CD8-positive, alpha-beta memory T cell (primary cell): ENCODE measurements at regions of chr20 and their contacts with region 1.

Region 1: GRCh38 chr20:38805502-38805957 is at the start of gene PPP1R16B:
- DNase-seq: peak; percentile 76 to 88 (median 83)
- H3K4me3 ChIP-seq: peak within 1 kb of the TSS; percentile 82
- H3K4me3 Mint-ChIP-seq: peak within 1 kb of the TSS; percentile 89 to 96 (median 91)
- H3K27ac ChIP-seq: peak within 1 kb of the TSS; percentile 98
- H3K27ac Mint-ChIP-seq: peak within 1 kb of the TSS; percentile 93 to 100 (median 98)
- H3K4me1 ChIP-seq: peaks cover 51% of the 10 kb centered on the region
- H3K4me1 Mint-ChIP-seq: peaks cover 51 to 56% (median 54%) of the 10 kb centered on the region in 3 donors
- H3K27me3 ChIP-seq: no peaks in the 10 kb centered on the region
- H3K27me3 Mint-ChIP-seq: peaks cover 0 to 7% of the 10 kb centered on the region in 2 donors
- total RNA-seq, gene PPP1R16B: 167 to 171 TPM

Region 2: DNA sequence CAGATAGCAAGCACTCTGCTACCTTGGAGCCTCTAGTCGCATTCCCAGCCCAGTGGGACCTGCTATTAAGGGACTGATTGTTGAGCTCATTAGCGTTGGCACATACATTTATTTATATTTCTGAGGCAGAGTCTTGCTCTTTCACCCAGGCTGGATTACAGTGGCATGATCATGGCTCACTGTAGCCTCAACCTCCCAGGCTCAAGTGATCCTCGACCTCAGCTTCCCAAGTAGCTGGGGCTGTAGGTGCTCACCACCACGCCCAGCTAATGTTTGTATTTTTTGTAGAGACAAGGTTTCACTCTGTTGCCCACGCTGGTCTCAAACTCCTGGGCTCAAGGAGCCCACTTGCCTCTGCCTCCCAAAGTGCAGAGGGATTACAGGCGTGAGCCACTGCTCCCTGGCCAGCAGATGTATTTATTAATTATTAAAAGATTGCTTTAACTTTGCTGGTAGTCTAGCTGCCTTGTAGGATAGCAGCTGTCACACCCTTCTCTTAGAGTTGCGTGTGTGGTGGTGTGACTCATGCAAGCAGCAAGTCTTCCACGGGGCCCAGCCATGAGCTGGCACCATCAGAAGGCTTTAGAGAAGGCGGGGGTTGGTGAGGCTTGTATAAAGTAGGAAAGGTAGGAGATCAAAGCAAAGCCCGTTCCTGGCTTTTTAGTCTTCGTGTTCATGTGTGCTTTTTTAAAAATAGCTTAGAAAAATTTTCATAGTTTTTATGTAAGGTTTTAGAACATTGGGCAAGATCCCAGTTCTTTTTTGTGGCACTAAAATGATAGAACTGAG is 40.8 kb before region 1 on chr20:
- CTCF ChIA-PET with region 1: no interaction called
- POLR2A ChIA-PET with region 1: no interaction called
- DNase-seq: no peak
- H3K4me3 ChIP-seq: no peak overlapping the region
- H3K4me3 Mint-ChIP-seq: no peak overlapping the region
- H3K27ac ChIP-seq: no peak overlapping the region
- H3K27ac Mint-ChIP-seq: peak overlapping the region in 4 of 8 donors; percentile 18 to 39 (median 30)
- H3K4me1 ChIP-seq: no peaks in the 10 kb centered on the region
- H3K4me1 Mint-ChIP-seq: peaks cover 0 to 4% (median 0%) of the 10 kb centered on the region in 3 donors
- H3K27me3 ChIP-seq: no peaks in the 10 kb centered on the region
- H3K27me3 Mint-ChIP-seq: no peaks in the 10 kb centered on the region

Region 3: GRCh38 chr20:38790200-38791053 is 15.1 kb before region 1 on chr20:
- CTCF ChIA-PET with region 1: interaction called, 26 read pairs
- POLR2A ChIA-PET with region 1: interaction called, 6 read pairs
- DNase-seq: peak; percentile 24 to 69 (median 37)
- H3K4me3 ChIP-seq: no peak overlapping the region
- H3K4me3 Mint-ChIP-seq: peak overlapping the region in 4 of 7 donors; percentile 44 to 77 (median 62)
- H3K27ac ChIP-seq: no peak overlapping the region
- H3K27ac Mint-ChIP-seq: peak overlapping the region in 4 of 8 donors; percentile 62 to 95 (median 82)
- H3K4me1 ChIP-seq: peaks cover 5% of the 10 kb centered on the region
- H3K4me1 Mint-ChIP-seq: peaks cover 10 to 18% (median 11%) of the 10 kb centered on the region in 3 donors
- H3K27me3 ChIP-seq: no peaks in the 10 kb centered on the region
- H3K27me3 Mint-ChIP-seq: peaks cover 0 to 2% of the 10 kb centered on the region in 2 donors

Region 4: DNA sequence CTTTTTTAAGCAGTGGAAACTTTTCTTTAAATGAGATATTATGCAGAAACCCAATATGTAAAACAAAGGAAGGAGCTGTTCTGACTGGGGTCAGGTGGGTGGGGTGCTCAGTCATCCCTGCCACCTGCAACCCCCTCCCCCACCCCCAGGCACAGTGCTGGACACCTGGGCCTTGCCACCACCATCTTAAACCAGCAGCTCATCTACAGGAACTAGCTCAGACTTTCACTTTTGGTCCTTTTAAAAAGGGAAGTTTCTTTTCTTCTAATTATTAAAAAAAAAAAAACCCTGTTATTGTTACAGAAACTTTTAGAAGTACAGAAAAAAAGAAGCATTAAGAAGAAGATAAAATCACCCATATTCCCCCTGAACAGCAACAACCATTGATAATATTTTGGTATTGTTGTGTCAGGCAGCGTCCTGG is 37.0 kb after region 1 on chr20:
- CTCF ChIA-PET with region 1: interaction called, 11 read pairs
- POLR2A ChIA-PET with region 1: interaction called, 11 read pairs
- DNase-seq: peak in 2 of 5 donors; percentile 45 to 65
- H3K4me3 ChIP-seq: peak overlapping the region; percentile 48
- H3K4me3 Mint-ChIP-seq: peak overlapping the region; percentile 15 to 92 (median 74)
- H3K27ac ChIP-seq: peak overlapping the region; percentile 89
- H3K27ac Mint-ChIP-seq: peak overlapping the region; percentile 93 to 100 (median 98)
- H3K4me1 ChIP-seq: peaks cover 69% of the 10 kb centered on the region
- H3K4me1 Mint-ChIP-seq: peaks cover 77 to 98% (median 86%) of the 10 kb centered on the region in 3 donors
- H3K27me3 ChIP-seq: no peaks in the 10 kb centered on the region
- H3K27me3 Mint-ChIP-seq: peaks cover 0 to 3% of the 10 kb centered on the region in 2 donors

Region 5: GRCh38 chr20:38875175-38875993 is 69.9 kb after region 1 on chr20:
- CTCF ChIA-PET with region 1: interaction called, 66 read pairs
- POLR2A ChIA-PET with region 1: interaction called, 80 read pairs
- DNase-seq: peak; percentile 65 to 90 (median 76)
- H3K4me3 ChIP-seq: peak overlapping the region; percentile 61
- H3K4me3 Mint-ChIP-seq: peak overlapping the region; percentile 78 to 93 (median 88)
- H3K27ac ChIP-seq: peak overlapping the region; percentile 85
- H3K27ac Mint-ChIP-seq: peak overlapping the region; percentile 97 to 100 (median 100)
- H3K4me1 ChIP-seq: peaks cover 65% of the 10 kb centered on the region
- H3K4me1 Mint-ChIP-seq: peaks cover 83 to 100% (median 99%) of the 10 kb centered on the region in 3 donors
- H3K27me3 ChIP-seq: no peaks in the 10 kb centered on the region
- H3K27me3 Mint-ChIP-seq: no peaks in the 10 kb centered on the region

Region 6: DNA sequence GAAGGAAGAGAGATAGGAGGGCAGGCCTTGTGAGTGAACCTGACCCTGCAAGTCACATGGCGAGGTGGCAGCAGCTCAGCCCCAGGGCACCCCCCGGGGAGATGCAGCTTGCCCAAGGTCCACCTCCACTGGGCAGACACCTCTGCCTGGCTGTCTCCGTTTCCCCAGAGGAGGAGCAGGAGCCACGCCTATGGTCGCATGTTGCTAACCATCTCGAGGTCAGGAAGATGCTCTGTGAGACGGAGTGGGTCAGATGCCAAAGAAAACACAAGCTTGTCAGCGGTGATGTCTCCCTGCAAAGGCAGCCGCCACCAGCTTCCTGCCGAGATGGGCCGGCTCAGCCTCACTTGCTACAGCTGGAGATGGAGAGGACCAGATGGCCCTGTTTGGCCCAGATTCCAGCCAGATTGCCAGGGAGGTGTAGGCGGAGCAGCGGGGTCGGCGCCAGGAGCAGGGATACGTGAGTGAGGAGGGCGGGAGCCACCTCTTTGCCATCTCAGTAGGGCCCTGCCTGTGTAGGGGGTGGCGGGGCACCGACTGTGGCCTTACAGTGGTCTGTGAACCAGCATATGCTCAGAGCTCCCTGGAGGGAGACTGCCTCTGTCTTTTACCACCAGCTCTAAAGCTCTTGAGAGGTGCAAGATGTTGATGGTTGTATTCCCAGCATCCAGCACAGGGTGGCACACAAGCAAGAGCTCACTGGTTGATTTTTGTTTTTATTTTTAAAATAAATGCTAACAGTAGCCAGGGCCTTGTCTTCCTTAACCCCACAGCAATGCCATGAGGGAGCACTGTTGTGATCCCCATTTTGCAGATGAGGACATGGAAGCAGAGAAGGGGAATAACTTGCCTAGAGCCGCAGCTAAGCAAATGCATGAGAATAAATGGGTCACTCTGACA is 77.8 kb after region 1 on chr20:
- CTCF ChIA-PET with region 1: interaction called, 6 read pairs
- POLR2A ChIA-PET with region 1: interaction called, 18 read pairs
- DNase-seq: peak in 1 of 5 donors; percentile 57
- H3K4me3 ChIP-seq: no peak overlapping the region
- H3K4me3 Mint-ChIP-seq: peak overlapping the region in 5 of 7 donors; percentile 52 to 84 (median 71)
- H3K27ac ChIP-seq: peak overlapping the region; percentile 18
- H3K27ac Mint-ChIP-seq: peak overlapping the region; percentile 87 to 99 (median 95)
- H3K4me1 ChIP-seq: peaks cover 23% of the 10 kb centered on the region
- H3K4me1 Mint-ChIP-seq: peaks cover 61 to 88% (median 70%) of the 10 kb centered on the region in 3 donors
- H3K27me3 ChIP-seq: no peaks in the 10 kb centered on the region
- H3K27me3 Mint-ChIP-seq: peaks cover 0 to 2% of the 10 kb centered on the region in 2 donors